PC-9 (cell line): ENCODE measurements at regions of chr7 and their contacts with region 1.

Region 1: GRCh38 chr7:69906283-69906995 is 308.2 kb downstream of the AUTS2 start:
- DNase-seq: no peak
- H3K4me3 ChIP-seq: no peak overlapping the region
- H3K27ac ChIP-seq: no peak overlapping the region
- H3K4me1 ChIP-seq: no peaks in the 10 kb centered on the region
- H3K27me3 ChIP-seq: no peaks in the 10 kb centered on the region
- CTCF ChIP-seq: no peak

Region 2: DNA sequence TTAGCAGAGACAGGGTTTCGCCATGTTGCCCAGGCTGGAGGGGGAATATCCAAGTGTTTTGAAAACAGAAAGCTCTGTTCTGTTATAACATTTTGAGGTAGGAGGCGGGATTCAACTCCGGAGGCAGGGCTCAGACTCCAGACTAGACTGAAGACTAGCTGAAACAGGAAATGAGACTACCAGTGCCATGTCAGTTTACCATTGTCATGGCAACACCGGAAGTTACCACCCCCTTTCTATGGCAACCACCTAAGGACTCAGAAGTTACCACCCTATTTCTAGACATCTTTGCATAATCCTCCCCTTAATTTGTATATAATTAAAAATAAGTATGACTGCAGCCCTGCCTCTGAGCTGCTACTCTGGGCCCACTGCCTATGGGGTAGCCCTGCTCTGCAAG is 1377.2 kb before region 1 on chr7:
- CTCF ChIA-PET with region 1: no interaction called
- POLR2A ChIA-PET with region 1: no interaction called
- intact Hi-C with region 1: no loop called
- DNase-seq: no peak
- H3K4me3 ChIP-seq: no peak overlapping the region
- H3K27ac ChIP-seq: no peak overlapping the region
- H3K4me1 ChIP-seq: no peaks in the 10 kb centered on the region
- H3K27me3 ChIP-seq: no peaks in the 10 kb centered on the region
- CTCF ChIP-seq: no peak

Region 3: DNA sequence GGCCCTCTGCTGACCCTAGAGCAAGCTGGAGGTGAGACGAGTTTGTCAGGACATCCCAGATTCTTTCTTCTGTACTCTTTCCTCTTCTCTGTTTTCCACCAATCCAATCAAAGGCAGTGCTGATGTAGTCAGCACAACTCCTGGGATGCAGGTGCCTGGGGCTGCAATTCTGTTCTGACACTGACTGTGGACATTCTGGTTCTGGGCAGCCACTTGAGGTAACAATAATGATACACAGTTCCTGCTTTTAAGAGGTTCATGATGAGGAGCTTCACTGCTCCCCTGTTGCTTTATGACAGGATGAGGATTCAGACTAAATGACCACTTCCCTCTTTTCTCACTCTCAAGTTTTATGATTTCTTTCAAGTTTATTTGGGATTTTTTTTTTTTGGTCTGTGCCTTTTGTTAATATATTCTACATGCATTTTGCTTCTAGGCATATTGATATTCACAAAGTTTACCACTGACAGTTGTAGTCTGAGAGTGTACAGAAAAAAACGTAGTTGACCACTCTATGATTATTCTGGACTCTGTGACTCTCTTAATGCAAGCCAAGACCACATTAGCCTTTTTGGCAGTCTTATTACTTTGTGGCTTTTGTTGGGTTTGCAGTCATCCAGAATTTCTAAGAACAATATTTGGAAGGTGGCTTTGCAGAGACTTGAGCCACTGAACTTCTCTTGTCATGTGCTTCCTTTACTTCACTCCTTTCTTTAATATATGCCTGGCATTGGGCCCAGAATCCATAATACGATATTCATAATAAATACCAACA is 60.5 kb before region 1 on chr7:
- CTCF ChIA-PET with region 1: no interaction called
- POLR2A ChIA-PET with region 1: no interaction called
- intact Hi-C with region 1: loop called (anchors 5 kb)
- DNase-seq: no peak
- H3K4me3 ChIP-seq: no peak overlapping the region
- H3K27ac ChIP-seq: no peak overlapping the region
- H3K4me1 ChIP-seq: no peaks in the 10 kb centered on the region
- H3K27me3 ChIP-seq: no peaks in the 10 kb centered on the region
- CTCF ChIP-seq: no peak